Dorsolateral prefrontal cortex (tissue), 120 donors: ENCODE measurements at regions of chr11 and their contacts with region 1.

Region 1: GRCh38 chr11:83071567-83072349 is at the start of gene RAB30:
- DNase-seq: peak; percentile 86 to 99 (median 98)
- H3K4me3 ChIP-seq: peak within 1 kb of the TSS; percentile 61 to 96 (median 86)
- H3K27ac ChIP-seq: peak within 1 kb of the TSS; percentile 32 to 98 (median 93)
- H3K27me3 ChIP-seq: no peaks in the 10 kb centered on the region
- CTCF ChIP-seq: peak in 26 of 56 donors; percentile 7 to 52 (median 26)
- total RNA-seq, gene RAB30: 47.5 to 117 (median 77.0) TPM

Region 2: GRCh38 chr11:82718307-82718706 is 353.5 kb before region 1 on chr11:
- intact Hi-C with region 1: loop called in 1 of 2 experiments (anchors 5 kb)
- DNase-seq: peak in 8 of 10 donors; percentile 28 to 61 (median 54)
- H3K4me3 ChIP-seq: peak overlapping the region in 40 of 59 donors; percentile 0 to 47 (median 22)
- H3K27ac ChIP-seq: peak overlapping the region; percentile 49 to 97 (median 91)
- H3K27me3 ChIP-seq: no peaks in the 10 kb centered on the region
- CTCF ChIP-seq: peak; percentile 76 to 98 (median 88)

Region 3: GRCh38 chr11:82927254-82927880 is 144.4 kb before region 1 on chr11:
- intact Hi-C with region 1: loop called (anchors 5 kb)
- DNase-seq: peak in 1 of 10 donors; percentile 13
- H3K4me3 ChIP-seq: peak overlapping the region in 1 of 59 donors; percentile 1
- H3K27ac ChIP-seq: no peak overlapping the region
- H3K27me3 ChIP-seq: no peaks in the 10 kb centered on the region
- CTCF ChIP-seq: peak; percentile 69 to 98 (median 83)

Region 4: GRCh38 chr11:83019888-83020579 is 51.7 kb before region 1 on chr11:
- intact Hi-C with region 1: loop called in 1 of 2 experiments (anchors 5 kb)
- DNase-seq: peak in 9 of 10 donors; percentile 63 to 85 (median 80)
- H3K4me3 ChIP-seq: peak overlapping the region in 5 of 59 donors; percentile 2 to 31 (median 26)
- H3K27ac ChIP-seq: peak overlapping the region; percentile 13 to 98 (median 86)
- H3K27me3 ChIP-seq: no peaks in the 10 kb centered on the region
- CTCF ChIP-seq: peak in 2 of 56 donors; percentile 8 to 37

Region 5: DNA sequence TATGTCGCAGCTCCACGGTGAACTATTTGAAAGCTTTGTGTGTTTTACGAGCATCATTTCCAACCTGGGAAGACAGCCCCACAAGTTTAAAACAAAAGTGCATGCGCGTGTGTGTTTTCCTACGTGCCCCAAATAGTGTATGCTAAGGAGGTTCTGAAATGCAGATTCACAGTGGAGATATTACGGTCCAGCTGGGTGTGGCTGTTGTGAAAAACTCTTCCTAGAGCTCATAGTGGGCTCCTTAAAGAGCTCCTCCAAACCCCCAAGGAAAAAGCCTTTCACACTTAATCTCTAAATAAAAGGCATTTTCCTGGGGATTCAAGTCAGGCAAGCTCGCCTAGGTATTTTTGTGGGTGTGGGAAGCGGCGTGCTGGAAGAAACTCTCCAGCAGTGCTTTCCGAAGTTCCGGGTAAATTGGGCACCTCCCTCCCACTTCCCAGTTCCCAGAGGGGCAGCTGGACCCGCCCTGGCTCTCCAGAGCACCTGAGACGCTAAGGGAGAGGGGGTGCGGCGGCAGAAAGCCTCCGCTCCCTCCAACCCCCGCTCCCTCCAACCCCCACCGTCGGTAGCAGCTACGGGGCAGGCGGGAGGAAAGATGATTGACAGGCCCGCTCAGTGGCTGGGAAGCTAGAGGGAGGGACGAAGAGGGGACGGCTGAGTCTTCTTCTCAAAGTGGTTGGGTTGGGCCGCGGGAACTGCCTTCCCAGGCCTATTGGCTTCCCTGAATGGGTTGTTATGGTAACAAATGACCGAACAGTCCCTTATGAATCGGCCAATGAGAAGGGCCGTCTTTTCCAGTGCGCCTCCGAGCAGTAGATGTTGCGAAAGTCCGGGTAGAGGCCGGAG is 84.6 kb after region 1 on chr11:
- intact Hi-C with region 1: loop called (anchors 2 kb)
- DNase-seq: peak in 5 of 10 donors; percentile 96 to 100 (median 99)
- H3K4me3 ChIP-seq: peak overlapping the region; percentile 48 to 100 (median 94)
- H3K27ac ChIP-seq: peak overlapping the region; percentile 35 to 100 (median 96)
- H3K27me3 ChIP-seq: no peaks in the 10 kb centered on the region
- CTCF ChIP-seq: peak in 11 of 56 donors; percentile 3 to 26 (median 11)

Region 6: GRCh38 chr11:83285771-83286528 is 214.2 kb after region 1 on chr11 and contains the start of gene CCDC90B:
- intact Hi-C with region 1: loop called (anchors 5 kb)
- DNase-seq: peak; percentile 94 to 99 (median 97)
- H3K4me3 ChIP-seq: peak within 1 kb of the TSS; percentile 66 to 100 (median 93)
- H3K27ac ChIP-seq: peak within 1 kb of the TSS; percentile 89 to 100 (median 99)
- H3K27me3 ChIP-seq: no peaks in the 10 kb centered on the region
- CTCF ChIP-seq: peak in 46 of 56 donors; percentile 22 to 78 (median 58)
- total RNA-seq, gene CCDC90B: 25.8 to 63.1 (median 35.8) TPM